CD8-positive, alpha-beta T cell (primary cell): ENCODE measurements at regions of chr12 and their contacts with region 1.

Region 1: GRCh38 chr12:68175557-68176061 is 16.1 kb upstream of the IFNG start:
- DNase-seq: peak; percentile 26 to 95 (median 60)
- ATAC-seq: peak; percentile 86
- H3K4me3 ChIP-seq: peak overlapping the region; percentile 19 to 33
- H3K4me3 Mint-ChIP-seq: peak overlapping the region; percentile 77
- H3K27ac ChIP-seq: peak overlapping the region; percentile 62 to 71
- H3K27ac Mint-ChIP-seq: peak overlapping the region; percentile 95
- H3K4me1 ChIP-seq: peaks cover 66% of the 10 kb centered on the region
- H3K4me1 Mint-ChIP-seq: peaks cover 67% of the 10 kb centered on the region
- H3K27me3 ChIP-seq: no peaks in the 10 kb centered on the region
- H3K27me3 Mint-ChIP-seq: no peaks in the 10 kb centered on the region
- CTCF ChIP-seq: no peak

Region 2: DNA sequence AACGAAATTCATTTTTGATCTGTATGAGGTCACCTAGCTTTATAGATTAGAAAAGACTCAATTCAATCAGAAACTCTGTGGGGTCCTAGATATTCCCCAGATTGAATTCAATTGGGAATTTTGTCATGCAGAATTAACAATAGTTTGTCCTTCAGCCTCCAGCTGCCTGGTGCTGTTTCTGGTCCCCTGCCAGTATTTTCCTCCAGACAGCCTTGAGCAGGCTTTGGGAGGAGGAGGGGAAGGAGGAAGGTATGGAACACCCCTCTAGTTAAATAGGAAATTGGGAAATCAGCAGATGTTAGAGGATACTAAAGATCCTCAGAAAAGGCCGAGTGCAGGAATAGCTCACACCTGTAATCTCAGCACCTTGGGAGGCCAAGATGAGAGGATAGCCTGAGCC is 1507.3 kb before region 1 on chr12:
- CTCF ChIA-PET with region 1: no interaction called
- POLR2A ChIA-PET with region 1: no interaction called
- intact Hi-C with region 1: no loop called
- DNase-seq: no peak
- ATAC-seq: no peak
- H3K4me3 ChIP-seq: no peak overlapping the region
- H3K4me3 Mint-ChIP-seq: no peak overlapping the region
- H3K27ac ChIP-seq: no peak overlapping the region
- H3K27ac Mint-ChIP-seq: no peak overlapping the region
- H3K4me1 ChIP-seq: no peaks in the 10 kb centered on the region
- H3K4me1 Mint-ChIP-seq: no peaks in the 10 kb centered on the region
- H3K27me3 ChIP-seq: peaks cover 0 to 3% of the 10 kb centered on the region in 2 experiments
- H3K27me3 Mint-ChIP-seq: peaks cover 4% of the 10 kb centered on the region
- CTCF ChIP-seq: no peak

Region 3: DNA sequence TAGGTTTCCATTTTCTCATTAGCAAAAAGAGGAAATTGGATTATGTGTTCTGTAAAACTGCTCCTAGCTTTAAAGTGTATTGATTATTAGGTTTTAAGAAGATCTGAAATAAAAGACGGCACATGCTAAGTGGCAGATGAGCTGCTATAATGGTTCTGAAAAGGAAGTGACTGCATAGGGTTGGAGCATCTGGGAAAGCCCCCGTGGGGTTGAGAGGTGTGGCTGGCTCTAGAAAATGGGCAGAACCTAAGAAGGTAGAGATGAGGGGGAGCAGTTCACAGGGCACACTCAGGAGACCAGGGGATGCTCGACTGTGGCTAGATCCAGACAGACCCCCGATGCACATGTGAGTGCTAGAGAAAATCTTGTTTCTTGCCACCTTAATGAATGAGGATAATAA is 184.5 kb before region 1 on chr12:
- CTCF ChIA-PET with region 1: no interaction called
- POLR2A ChIA-PET with region 1: no interaction called
- intact Hi-C with region 1: no loop called
- DNase-seq: peak in 7 of 9 experiments; percentile 12 to 76 (median 43)
- ATAC-seq: peak; percentile 89
- H3K4me3 ChIP-seq: peak overlapping the region in 1 of 2 experiments; percentile 7
- H3K4me3 Mint-ChIP-seq: peak overlapping the region; percentile 82
- H3K27ac ChIP-seq: peak overlapping the region in 1 of 2 experiments; percentile 58
- H3K27ac Mint-ChIP-seq: peak overlapping the region; percentile 81
- H3K4me1 ChIP-seq: peaks cover 29% of the 10 kb centered on the region
- H3K4me1 Mint-ChIP-seq: peaks cover 59% of the 10 kb centered on the region
- H3K27me3 ChIP-seq: no peaks in the 10 kb centered on the region
- H3K27me3 Mint-ChIP-seq: no peaks in the 10 kb centered on the region
- CTCF ChIP-seq: no peak

Region 4: DNA sequence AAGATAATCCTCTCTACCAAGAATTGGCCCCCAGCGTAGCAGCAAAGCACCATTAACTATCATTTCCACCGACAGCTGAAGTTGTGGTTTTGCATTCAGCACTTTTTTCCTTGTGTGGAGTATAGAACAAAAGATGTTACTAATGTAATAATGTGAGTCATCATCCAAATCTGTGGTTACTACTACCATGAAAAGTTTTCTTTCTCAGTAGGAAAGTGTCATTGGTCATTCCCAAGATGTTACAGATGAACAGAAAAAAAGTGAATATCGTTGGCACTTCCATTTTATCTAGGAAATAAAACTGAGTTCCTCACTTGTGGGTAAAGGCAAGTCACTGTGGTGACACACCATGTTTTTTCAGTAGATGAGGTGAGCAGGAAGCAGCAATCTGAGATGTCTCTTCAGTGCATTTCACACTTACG is 14.2 kb after region 1 on chr12:
- CTCF ChIA-PET with region 1: interaction called, 8 read pairs
- POLR2A ChIA-PET with region 1: interaction called, 10 read pairs
- intact Hi-C with region 1: loop called in 1 of 2 experiments (anchors 2 kb)
- DNase-seq: peak in 5 of 9 experiments; percentile 21 to 78 (median 34)
- ATAC-seq: peak; percentile 86
- H3K4me3 ChIP-seq: no peak overlapping the region
- H3K4me3 Mint-ChIP-seq: peak overlapping the region; percentile 63
- H3K27ac ChIP-seq: peak overlapping the region in 1 of 2 experiments; percentile 64
- H3K27ac Mint-ChIP-seq: peak overlapping the region; percentile 85
- H3K4me1 ChIP-seq: peaks cover 14% of the 10 kb centered on the region
- H3K4me1 Mint-ChIP-seq: peaks cover 30% of the 10 kb centered on the region
- H3K27me3 ChIP-seq: no peaks in the 10 kb centered on the region
- H3K27me3 Mint-ChIP-seq: no peaks in the 10 kb centered on the region
- CTCF ChIP-seq: no peak